ENCODE measurements at regions of chr7 and their contacts with region 1.

Region 1: GRCh38 chr7:127347567-127348246 is 44.8 kb downstream of the ZNF800 start:
- DNase-seq: peak; percentile 85
- ATAC-seq: peak; percentile 99
- H3K4me3 ChIP-seq: peak overlapping the region in 4 of 5 experiments; percentile 25 to 59 (median 42)
- H3K4me3 Mint-ChIP-seq: peak overlapping the region; percentile 81
- H3K27ac ChIP-seq: no peak overlapping the region
- H3K27ac Mint-ChIP-seq: no peak overlapping the region
- H3K4me1 ChIP-seq: peaks cover 3 to 11% of the 10 kb centered on the region in 2 donors
- H3K4me1 Mint-ChIP-seq: peaks cover 23% of the 10 kb centered on the region
- H3K27me3 ChIP-seq: no peaks in the 10 kb centered on the region
- H3K27me3 Mint-ChIP-seq: no peaks in the 10 kb centered on the region
- CTCF ChIP-seq: peak; percentile 61

Region 2: DNA sequence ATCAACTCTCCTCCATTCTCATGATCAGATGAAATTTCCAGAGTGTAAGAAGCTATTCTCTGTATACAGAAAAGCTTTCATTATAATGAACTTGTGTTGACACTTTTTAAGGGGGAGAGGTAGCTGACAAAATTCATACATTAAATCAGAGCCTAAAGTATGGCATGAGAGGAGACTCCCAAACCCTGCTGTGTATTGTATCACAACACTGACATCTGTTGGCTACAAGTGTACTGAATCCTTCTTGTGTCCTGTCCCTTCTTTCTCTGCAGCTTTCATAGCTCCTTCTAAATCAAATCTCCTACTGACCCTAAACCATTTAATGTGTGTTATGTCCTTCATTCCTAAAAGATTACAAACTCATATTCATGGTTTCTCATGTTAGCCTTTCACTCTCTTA is 166.8 kb after region 1 on chr7:
- CTCF ChIA-PET with region 1: interaction called, 9 read pairs
- POLR2A ChIA-PET with region 1: no interaction called
- intact Hi-C with region 1: loop called (anchors 1 kb)
- DNase-seq: peak; percentile 47
- ATAC-seq: no peak
- H3K4me3 ChIP-seq: no peak overlapping the region
- H3K4me3 Mint-ChIP-seq: no peak overlapping the region
- H3K27ac ChIP-seq: no peak overlapping the region
- H3K27ac Mint-ChIP-seq: no peak overlapping the region
- H3K4me1 ChIP-seq: no peaks in the 10 kb centered on the region
- H3K4me1 Mint-ChIP-seq: no peaks in the 10 kb centered on the region
- H3K27me3 ChIP-seq: no peaks in the 10 kb centered on the region
- H3K27me3 Mint-ChIP-seq: peaks cover 28% of the 10 kb centered on the region
- CTCF ChIP-seq: peak; percentile 51

Measured in B cell (primary cell).